Right ventricle myocardium superior (tissue), 1 donor: ENCODE measurements at regions of chrX and their contacts with region 1.

Region 1: GRCh38 chrX:74382613-74383012 is 38.7 kb upstream of the SLC16A2 start:
- DNase-seq: peak; percentile 56
- ATAC-seq: peak; percentile 91

Region 2: DNA sequence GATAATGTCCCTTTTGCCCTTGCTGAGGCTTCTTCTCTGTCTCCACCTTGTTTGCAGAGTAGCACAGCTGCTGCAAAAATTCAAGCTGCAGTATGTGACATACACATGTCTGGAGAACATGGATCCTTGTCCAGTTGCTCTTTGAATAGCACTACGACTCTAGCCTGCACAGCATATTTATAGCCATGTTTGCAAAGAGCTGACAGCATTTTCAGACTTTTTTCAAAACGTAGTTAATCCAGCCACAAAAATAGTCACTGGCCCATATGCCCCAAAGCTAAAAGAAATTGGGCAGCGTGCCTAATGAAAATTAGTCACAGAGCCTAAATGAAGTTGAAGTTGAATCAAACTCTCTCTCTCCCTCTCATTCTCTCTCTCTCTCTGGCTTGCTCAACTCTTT is 56.2 kb after region 1 on chrX:
- intact Hi-C with region 1: no loop called
- DNase-seq: no peak
- ATAC-seq: no peak

Region 3: DNA sequence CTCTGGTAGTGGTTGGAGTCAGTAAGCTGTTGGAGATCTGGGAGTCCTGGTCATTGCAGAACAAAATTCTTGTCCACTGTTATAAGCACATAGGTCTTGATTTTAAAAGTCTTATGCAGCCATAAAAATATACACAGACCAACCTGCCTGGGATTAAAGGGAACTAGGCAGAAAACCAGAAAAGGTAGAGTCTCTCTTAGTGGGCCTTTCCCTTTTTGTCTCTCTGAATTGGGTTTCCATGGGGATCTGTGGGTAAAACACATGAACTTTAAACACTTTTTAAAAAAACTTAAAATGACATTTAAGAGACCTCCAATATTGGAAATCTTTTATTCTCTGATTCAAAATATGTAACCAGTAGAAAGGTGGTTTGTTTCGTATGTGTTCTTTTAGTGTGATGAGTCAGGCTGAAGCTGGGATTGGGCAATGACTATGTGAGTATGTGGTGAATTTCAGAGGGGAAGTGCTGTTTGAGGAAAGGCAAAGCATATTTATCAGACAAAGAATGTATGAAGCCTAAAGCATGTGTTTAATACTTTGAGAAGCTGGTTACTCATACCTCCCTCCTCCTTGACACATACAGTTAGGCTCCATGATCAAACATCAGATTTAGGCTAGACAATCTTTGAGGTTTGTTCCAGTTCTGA is 68.3 kb after region 1 on chrX:
- intact Hi-C with region 1: no loop called
- DNase-seq: no peak
- ATAC-seq: no peak

Region 4: DNA sequence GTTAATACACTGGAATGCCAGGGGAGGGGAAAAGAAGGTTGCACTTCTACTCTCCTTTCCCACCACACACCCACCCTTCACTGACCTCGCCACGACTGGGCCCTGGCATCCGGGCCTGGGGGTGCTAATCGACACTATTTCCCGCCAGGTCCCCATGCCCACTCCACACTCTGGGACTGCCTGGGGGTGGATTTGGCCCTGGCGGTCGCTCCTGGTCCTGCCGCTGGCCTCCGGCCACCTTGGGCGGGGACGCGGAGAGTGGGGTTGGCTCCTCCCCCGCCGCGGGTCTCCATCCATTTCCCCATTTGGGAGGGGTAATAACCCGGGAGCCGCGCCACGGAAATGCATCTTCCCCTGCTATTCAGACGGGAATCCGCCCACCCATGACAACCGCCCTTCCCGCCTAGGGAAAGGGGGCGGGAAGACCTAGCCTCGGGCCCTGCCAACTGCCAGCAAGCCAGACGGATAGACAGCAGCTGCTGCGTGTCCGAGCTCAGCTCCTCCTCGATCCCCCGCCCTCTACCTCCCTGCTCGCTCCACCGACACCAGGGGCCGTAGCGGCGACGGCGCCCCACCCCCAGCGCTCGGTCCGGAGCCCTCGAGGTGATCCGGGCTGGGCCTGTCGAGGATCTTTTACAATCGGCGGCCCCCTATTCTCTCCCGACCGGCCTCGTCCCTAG is 153.7 kb after region 1 on chrX:
- intact Hi-C with region 1: loop called (anchors 5 kb)
- DNase-seq: peak; percentile 91
- ATAC-seq: peak; percentile 89

Region 5: DNA sequence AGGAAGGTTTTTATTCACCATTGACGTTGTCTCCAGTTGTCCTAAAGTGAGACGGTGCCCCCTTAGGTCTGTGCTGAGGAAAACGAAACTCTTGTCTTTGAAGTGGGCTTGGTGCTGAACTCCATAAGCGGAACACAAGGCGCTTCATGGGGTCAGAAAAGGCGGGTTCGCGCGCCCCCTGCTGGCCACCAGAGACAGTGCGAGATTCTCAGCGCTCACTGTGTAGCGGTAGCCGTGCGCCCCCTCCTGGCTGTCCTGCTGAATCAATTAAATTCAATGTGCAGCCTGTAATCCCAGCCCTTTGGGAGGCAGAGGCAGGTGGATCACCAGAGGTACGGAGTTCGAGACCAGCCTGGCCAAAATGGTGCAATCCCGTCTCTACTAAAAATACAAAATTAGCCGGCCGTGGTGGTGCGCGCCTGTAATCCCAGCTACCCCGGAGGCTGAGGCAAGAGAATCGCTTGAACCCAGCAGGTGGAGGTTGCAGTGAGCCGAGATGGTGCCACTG is 167.7 kb after region 1 on chrX:
- intact Hi-C with region 1: loop called (anchors 2 kb)
- DNase-seq: peak; percentile 91
- ATAC-seq: peak; percentile 97